ENCODE measurements at regions of chr18 and their contacts with region 1.

Region 1: GRCh38 chr18:1710114-1710513 is 805.4 kb downstream of the ADCYAP1 start:
- DNase-seq: no peak
- ATAC-seq: no peak
- H3K4me3 ChIP-seq: no peak overlapping the region
- H3K4me3 Mint-ChIP-seq: no peak overlapping the region
- H3K27ac ChIP-seq: no peak overlapping the region
- H3K27ac Mint-ChIP-seq: no peak overlapping the region
- H3K4me1 ChIP-seq: no peaks in the 10 kb centered on the region
- H3K4me1 Mint-ChIP-seq: no peaks in the 10 kb centered on the region
- H3K27me3 ChIP-seq: no peaks in the 10 kb centered on the region
- H3K27me3 Mint-ChIP-seq: no peaks in the 10 kb centered on the region

Region 2: GRCh38 chr18:1784113-1784512 is 74.0 kb after region 1 on chr18:
- CTCF ChIA-PET with region 1: no interaction called
- POLR2A ChIA-PET with region 1: no interaction called
- intact Hi-C with region 1: no loop called
- DNase-seq: no peak
- ATAC-seq: no peak
- H3K4me3 ChIP-seq: no peak overlapping the region
- H3K4me3 Mint-ChIP-seq: no peak overlapping the region
- H3K27ac ChIP-seq: no peak overlapping the region
- H3K27ac Mint-ChIP-seq: no peak overlapping the region
- H3K4me1 ChIP-seq: no peaks in the 10 kb centered on the region
- H3K4me1 Mint-ChIP-seq: no peaks in the 10 kb centered on the region
- H3K27me3 ChIP-seq: no peaks in the 10 kb centered on the region
- H3K27me3 Mint-ChIP-seq: peaks cover 0 to 4% (median 0%) of the 10 kb centered on the region in 5 donors

Region 3: GRCh38 chr18:1846640-1847039 is 136.5 kb after region 1 on chr18:
- CTCF ChIA-PET with region 1: no interaction called
- POLR2A ChIA-PET with region 1: no interaction called
- intact Hi-C with region 1: loop called in 1 of 2 experiments (anchors 10 kb)
- DNase-seq: no peak
- ATAC-seq: no peak
- H3K4me3 ChIP-seq: no peak overlapping the region
- H3K4me3 Mint-ChIP-seq: no peak overlapping the region
- H3K27ac ChIP-seq: no peak overlapping the region
- H3K27ac Mint-ChIP-seq: no peak overlapping the region
- H3K4me1 ChIP-seq: no peaks in the 10 kb centered on the region
- H3K4me1 Mint-ChIP-seq: peaks cover 0 to 3% (median 0%) of the 10 kb centered on the region in 7 donors
- H3K27me3 ChIP-seq: no peaks in the 10 kb centered on the region
- H3K27me3 Mint-ChIP-seq: peaks cover 0 to 20% (median 7%) of the 10 kb centered on the region in 5 donors

Region 4: GRCh38 chr18:1891626-1892025 is 181.5 kb after region 1 on chr18:
- CTCF ChIA-PET with region 1: no interaction called
- POLR2A ChIA-PET with region 1: no interaction called
- intact Hi-C with region 1: no loop called
- DNase-seq: no peak
- ATAC-seq: no peak
- H3K4me3 ChIP-seq: no peak overlapping the region
- H3K4me3 Mint-ChIP-seq: no peak overlapping the region
- H3K27ac ChIP-seq: no peak overlapping the region
- H3K27ac Mint-ChIP-seq: no peak overlapping the region
- H3K4me1 ChIP-seq: no peaks in the 10 kb centered on the region
- H3K4me1 Mint-ChIP-seq: peaks cover 0 to 2% (median 0%) of the 10 kb centered on the region in 7 donors
- H3K27me3 ChIP-seq: no peaks in the 10 kb centered on the region
- H3K27me3 Mint-ChIP-seq: peaks cover 0 to 11% (median 0%) of the 10 kb centered on the region in 5 donors